ENCODE measurements at regions of chr13 and their contacts with region 1.

Region 1: DNA sequence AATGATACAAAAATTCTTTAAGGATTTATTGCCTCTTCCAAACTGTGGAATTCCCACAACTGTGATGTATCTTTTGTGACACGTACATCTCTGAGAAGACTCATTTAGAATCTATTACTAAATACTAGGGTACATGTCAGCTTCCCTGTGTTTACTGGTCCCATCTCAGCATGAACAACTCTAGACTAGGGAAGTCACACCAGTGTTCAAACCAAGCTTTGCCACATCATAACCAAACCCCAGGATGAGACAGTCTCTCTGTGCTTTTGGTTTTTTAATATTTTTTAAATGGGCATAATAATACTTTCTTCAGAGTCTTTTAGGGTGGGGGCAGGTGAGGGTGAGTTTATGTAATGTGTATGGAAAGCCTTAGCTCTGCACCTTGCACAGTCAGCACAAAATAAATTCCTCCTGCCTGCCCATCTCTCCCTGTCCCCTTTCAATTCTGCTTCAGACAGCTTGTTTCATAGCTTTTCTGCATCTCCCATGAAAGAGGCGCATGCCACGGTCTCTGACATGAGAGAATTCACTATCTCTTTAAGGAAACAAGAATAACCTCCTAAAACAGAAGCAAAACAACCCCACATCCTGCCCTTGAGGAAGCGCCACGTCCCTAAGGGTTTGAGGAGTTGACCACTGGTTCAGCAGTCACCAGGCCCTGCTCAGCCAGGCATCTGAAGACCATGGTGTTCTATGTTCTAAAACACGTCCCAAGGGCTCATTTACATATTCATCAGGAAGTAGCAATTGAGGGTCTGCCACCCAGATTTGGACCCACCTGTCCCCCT is 174.5 kb downstream of the USP12 start:
- DNase-seq: no peak
- H3K4me3 ChIP-seq: no peak overlapping the region
- H3K27ac ChIP-seq: no peak overlapping the region
- H3K4me1 ChIP-seq: peaks cover 4% of the 10 kb centered on the region
- H3K27me3 ChIP-seq: no peaks in the 10 kb centered on the region
- CTCF ChIP-seq: no peak

Region 2: GRCh38 chr13:26946684-26947343 is 50.3 kb before region 1 on chr13:
- CTCF ChIA-PET with region 1: no interaction called
- dilution Hi-C with region 1: loop called (anchors 5 kb)
- in situ Hi-C with region 1: no loop called
- intact Hi-C with region 1: no loop called
- DNase-seq: peak; percentile 29
- H3K4me3 ChIP-seq: no peak overlapping the region
- H3K27ac ChIP-seq: no peak overlapping the region
- H3K4me1 ChIP-seq: no peaks in the 10 kb centered on the region
- H3K27me3 ChIP-seq: no peaks in the 10 kb centered on the region
- CTCF ChIP-seq: peak; percentile 78 to 86

Region 3: DNA sequence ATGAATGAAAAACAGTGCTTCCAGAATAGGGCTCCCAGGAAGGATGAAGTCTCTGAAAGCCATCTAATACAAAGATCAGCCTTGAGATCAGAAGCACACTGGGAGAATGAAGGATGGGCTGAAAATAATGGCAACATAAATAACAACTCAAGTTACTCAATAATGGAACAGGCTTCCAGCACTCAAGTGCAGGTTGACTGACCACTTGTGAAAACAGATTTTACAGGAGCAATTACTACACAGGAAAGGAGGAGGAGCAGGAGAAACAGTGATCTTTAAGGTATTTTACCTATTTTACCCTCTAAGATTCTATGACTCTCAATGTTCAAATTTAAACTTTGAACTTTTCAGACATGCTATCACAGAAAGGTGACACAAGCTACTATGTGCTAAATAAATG is 68.4 kb after region 1 on chr13:
- CTCF ChIA-PET with region 1: no interaction called
- dilution Hi-C with region 1: no loop called
- in situ Hi-C with region 1: no loop called
- intact Hi-C with region 1: no loop called
- DNase-seq: no peak
- H3K4me3 ChIP-seq: no peak overlapping the region
- H3K27ac ChIP-seq: no peak overlapping the region
- H3K4me1 ChIP-seq: no peaks in the 10 kb centered on the region
- H3K27me3 ChIP-seq: no peaks in the 10 kb centered on the region
- CTCF ChIP-seq: no peak

Region 4: DNA sequence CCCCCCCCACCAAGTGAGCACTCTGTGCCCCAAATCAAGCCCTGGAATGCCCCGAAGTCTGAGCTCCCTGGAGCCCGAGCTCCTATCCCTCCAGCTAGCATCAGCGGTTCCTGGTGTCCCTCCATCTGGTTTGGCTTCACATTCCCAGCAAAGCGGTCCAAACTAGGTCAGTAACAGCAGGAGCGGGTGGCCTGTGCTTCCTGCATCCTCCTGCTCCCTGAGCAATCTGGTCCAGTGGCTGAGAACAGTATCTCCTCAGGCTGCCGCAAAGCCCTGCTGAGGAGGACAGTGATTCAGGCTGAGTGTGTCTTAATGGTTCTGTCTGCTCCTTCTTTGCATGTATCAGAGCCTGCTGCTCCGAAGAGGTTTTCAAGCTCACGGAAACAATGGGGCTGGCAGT is 299.3 kb after region 1 on chr13:
- CTCF ChIA-PET with region 1: no interaction called
- dilution Hi-C with region 1: loop called (anchors 5 kb)
- in situ Hi-C with region 1: no loop called
- intact Hi-C with region 1: no loop called
- DNase-seq: no peak
- H3K4me3 ChIP-seq: no peak overlapping the region
- H3K27ac ChIP-seq: no peak overlapping the region
- H3K4me1 ChIP-seq: no peaks in the 10 kb centered on the region
- H3K27me3 ChIP-seq: peaks cover 2% of the 10 kb centered on the region
- CTCF ChIP-seq: no peak

Region 5: GRCh38 chr13:27321468-27322431 is 324.6 kb after region 1 on chr13:
- CTCF ChIA-PET with region 1: interaction called, 13 read pairs
- dilution Hi-C with region 1: no loop called
- in situ Hi-C with region 1: no loop called
- intact Hi-C with region 1: no loop called
- DNase-seq: no peak
- H3K4me3 ChIP-seq: no peak overlapping the region
- H3K27ac ChIP-seq: no peak overlapping the region
- H3K4me1 ChIP-seq: no peaks in the 10 kb centered on the region
- H3K27me3 ChIP-seq: no peaks in the 10 kb centered on the region
- CTCF ChIP-seq: no peak

Measured in mammary epithelial cell (primary cell).